PC-3 (cell line): ENCODE measurements at regions of chr2 and their contacts with region 1.

Region 1: DNA sequence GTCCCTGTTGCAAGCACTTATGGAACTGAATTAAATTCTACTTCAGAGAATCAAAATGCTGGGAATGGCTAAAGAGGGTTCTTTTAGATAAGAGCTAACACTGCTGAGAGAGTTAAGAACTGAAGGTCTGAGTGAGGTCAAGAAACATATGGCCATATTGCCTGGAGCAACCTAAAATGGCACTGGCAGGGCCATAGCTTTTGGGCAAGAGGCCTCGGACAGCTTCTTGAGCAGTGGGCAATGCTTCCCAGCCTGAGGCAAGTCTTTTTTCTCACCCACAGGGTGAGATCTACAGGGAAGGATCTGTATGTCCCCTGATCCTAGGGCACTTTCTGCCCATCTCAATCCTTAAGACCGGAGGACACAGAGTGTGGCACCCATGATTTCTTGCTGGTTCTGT is 244.6 kb upstream of the NT5C1B start:
- DNase-seq: no peak
- ATAC-seq: no peak
- H3K4me3 ChIP-seq: no peak overlapping the region
- H3K27ac ChIP-seq: no peak overlapping the region
- H3K4me1 ChIP-seq: peaks cover 24% of the 10 kb centered on the region
- H3K27me3 ChIP-seq: no peaks in the 10 kb centered on the region
- CTCF ChIP-seq: no peak

Region 2: DNA sequence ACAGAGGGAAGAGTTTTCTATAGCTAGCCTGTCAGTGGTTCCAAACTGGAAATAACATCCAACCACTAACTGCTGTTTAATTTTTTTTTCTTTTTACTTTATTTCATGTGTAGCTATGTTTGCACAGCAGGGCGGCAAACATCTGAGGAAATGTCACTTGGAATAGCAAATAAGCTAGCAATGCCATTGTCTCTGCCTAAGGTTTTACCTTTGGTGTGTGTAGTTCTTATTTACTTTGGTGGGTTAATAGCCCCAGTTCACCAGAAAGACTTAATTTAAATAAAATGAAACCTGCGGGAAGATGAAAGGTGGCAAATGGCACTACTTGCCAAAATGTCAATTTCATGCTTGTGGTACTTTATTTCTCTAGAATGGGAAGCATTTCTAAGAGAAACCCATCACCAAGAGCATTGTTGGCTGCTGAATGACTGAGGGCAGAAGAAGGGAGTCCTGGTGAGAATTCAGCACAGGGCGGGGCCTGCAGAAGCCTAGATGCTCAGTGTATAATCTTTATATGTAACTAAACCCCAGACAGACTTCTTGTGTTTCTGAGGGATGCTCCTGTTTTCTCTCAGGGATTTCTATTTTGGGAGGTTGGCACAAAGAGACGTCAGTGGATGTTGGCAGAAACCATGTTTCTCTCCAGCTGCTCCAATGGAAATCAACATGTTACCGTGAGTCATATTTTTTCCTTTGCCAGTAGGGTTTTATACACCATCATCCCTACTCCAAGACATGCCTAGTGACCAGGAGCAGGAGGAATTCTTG is 55.8 kb after region 1 on chr2:
- CTCF ChIA-PET with region 1: no interaction called
- POLR2A ChIA-PET with region 1: no interaction called
- intact Hi-C with region 1: no loop called
- DNase-seq: no peak
- ATAC-seq: no peak
- H3K4me3 ChIP-seq: no peak overlapping the region
- H3K27ac ChIP-seq: no peak overlapping the region
- H3K4me1 ChIP-seq: no peaks in the 10 kb centered on the region
- H3K27me3 ChIP-seq: no peaks in the 10 kb centered on the region
- CTCF ChIP-seq: no peak

Region 3: GRCh38 chr2:19158208-19158607 is 324.3 kb after region 1 on chr2:
- CTCF ChIA-PET with region 1: interaction called, 11 read pairs
- POLR2A ChIA-PET with region 1: no interaction called
- intact Hi-C with region 1: no loop called
- DNase-seq: no peak
- ATAC-seq: 0 out of 2 replicates have a peak, but pooled peaks have one; percentile 38
- H3K4me3 ChIP-seq: no peak overlapping the region
- H3K27ac ChIP-seq: no peak overlapping the region
- H3K4me1 ChIP-seq: no peaks in the 10 kb centered on the region
- H3K27me3 ChIP-seq: no peaks in the 10 kb centered on the region
- CTCF ChIP-seq: no peak